ENCODE measurements at regions of chr12 and their contacts with region 1.

Region 1: DNA sequence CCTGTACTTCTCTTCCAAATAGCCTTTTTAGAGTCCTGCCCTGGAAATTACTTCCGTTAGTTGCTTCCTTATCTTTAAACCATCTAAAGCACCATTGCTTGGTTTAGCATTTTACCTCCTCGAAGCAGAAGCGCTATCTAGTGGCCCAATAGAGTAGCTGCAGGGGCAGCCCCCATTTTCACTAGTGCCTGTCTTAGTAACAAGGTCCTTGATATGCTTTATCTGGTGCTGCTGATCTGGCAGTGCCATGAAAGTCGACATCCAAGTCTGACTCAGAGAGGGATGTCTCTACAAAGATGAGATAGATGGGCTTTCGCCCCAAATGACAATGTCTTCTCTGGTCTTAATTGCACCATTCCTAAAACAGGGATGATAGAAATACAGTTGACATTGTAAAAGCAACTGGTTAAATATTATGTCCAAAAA is 25.0 kb upstream of the CIT start:
- DNase-seq: peak; percentile 26 to 76 (median 63)
- H3K4me3 ChIP-seq: no peak overlapping the region
- H3K27ac ChIP-seq: no peak overlapping the region
- H3K27me3 ChIP-seq: no peaks in the 10 kb centered on the region
- CTCF ChIP-seq: peak; percentile 55 to 87 (median 80)

Region 2: GRCh38 chr12:119804011-119804641 is 98.0 kb before region 1 on chr12:
- intact Hi-C with region 1: loop called in 1 of 2 experiments (anchors 5 kb)
- DNase-seq: peak; percentile 53 to 91 (median 82)
- H3K4me3 ChIP-seq: peak overlapping the region; percentile 46 to 82 (median 67)
- H3K27ac ChIP-seq: peak overlapping the region in 57 of 59 donors; percentile 21 to 95 (median 82)
- H3K27me3 ChIP-seq: no peaks in the 10 kb centered on the region
- CTCF ChIP-seq: peak in 54 of 56 donors; percentile 32 to 84 (median 64)